GM10248 (cell line): ENCODE measurements at regions of chr14 and their contacts with region 1.

Region 1: GRCh38 chr14:55051426-55052268 is at the start of gene MAPK1IP1L:
- DNase-seq: peak; percentile 95
- CTCF ChIP-seq: peak; percentile 100

Region 2: GRCh38 chr14:54440873-54441868 is 610.5 kb before region 1 on chr14 and contains the start of gene CNIH1:
- CTCF ChIA-PET with region 1: no interaction called
- POLR2A ChIA-PET with region 1: no interaction called
- DNase-seq: peak; percentile 96
- CTCF ChIP-seq: peak; percentile 92

Region 3: DNA sequence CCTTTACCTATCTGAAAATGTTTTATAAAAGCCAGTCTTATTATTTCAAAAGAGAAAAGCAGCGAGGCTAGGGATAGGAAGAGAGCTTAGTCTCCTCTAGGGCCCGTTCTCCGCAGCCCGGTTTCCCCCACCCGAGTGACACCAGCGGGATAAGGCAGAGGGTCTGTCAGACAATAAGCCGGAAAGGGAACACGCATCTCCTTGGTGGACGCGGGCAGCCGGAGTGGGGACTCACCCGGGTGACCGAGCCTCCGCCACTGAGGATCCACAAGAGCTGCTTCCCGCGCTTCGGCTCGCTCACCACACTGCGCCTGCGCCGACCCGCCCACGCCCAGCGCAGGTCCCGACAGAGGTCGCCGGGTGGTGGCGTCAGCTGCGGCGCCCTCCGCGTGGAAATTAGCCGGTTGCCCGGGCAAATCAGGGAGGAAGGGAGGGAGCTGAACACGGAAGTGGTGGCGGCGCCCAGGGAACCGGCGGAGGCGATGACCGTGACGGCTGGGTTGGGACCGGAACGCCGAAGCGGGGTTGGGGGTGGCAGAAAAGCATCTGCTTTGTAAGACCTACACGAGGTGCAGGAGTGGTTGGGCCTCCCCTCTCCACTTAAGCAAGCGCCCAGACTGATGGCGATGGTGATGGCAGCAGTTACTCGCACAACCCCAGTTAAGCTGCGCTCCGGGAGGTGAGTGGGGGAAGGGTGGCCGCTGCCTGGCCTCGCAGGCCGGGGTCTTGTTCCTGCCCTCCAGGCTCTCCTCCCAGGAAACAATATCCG is 24.7 kb before region 1 on chr14 and contains the starts of genes SOCS4 and WDHD1:
- CTCF ChIA-PET with region 1: interaction called, 40 read pairs
- POLR2A ChIA-PET with region 1: interaction called, 7 read pairs
- DNase-seq: peak; percentile 96
- CTCF ChIP-seq: peak; percentile 8

Region 4: GRCh38 chr14:55062517-55063351 is 11.1 kb after region 1 on chr14:
- CTCF ChIA-PET with region 1: interaction called, 23 read pairs
- POLR2A ChIA-PET with region 1: interaction called, 3 read pairs
- DNase-seq: no peak
- CTCF ChIP-seq: no peak

Region 5: GRCh38 chr14:55077155-55077554 is 25.5 kb after region 1 on chr14:
- CTCF ChIA-PET with region 1: interaction called, 43 read pairs
- POLR2A ChIA-PET with region 1: interaction called, 9 read pairs
- DNase-seq: no peak
- CTCF ChIP-seq: no peak

Region 6: GRCh38 chr14:55160989-55161388 is 109.3 kb after region 1 on chr14:
- CTCF ChIA-PET with region 1: interaction called, 27 read pairs
- POLR2A ChIA-PET with region 1: no interaction called
- DNase-seq: peak; percentile 44
- CTCF ChIP-seq: peak; percentile 29

Region 7: DNA sequence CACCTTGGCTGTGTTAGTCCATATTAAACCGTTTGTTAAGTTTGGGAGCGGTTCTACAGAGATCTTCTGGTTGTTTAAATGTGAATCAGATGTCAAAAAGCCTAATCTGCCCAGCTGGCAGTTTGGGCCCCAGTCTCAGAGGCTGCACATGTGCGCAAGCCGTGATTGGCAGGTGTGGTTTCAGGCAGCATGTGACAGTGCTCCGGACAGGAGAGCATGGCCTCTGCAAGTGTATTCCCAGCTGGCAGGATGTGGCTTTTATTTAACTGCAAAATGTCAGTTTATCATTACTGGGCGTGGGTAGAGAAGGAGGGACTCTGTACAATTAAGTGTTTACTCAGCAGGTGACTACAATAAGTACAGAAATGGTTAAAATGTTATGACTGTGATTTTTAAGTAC is 1144.1 kb after region 1 on chr14:
- CTCF ChIA-PET with region 1: no interaction called
- POLR2A ChIA-PET with region 1: no interaction called
- DNase-seq: peak; percentile 45
- CTCF ChIP-seq: no peak